Posterior vena cava (tissue), 2 donors: ENCODE measurements at regions of chr5 and their contacts with region 1.

Region 1: DNA sequence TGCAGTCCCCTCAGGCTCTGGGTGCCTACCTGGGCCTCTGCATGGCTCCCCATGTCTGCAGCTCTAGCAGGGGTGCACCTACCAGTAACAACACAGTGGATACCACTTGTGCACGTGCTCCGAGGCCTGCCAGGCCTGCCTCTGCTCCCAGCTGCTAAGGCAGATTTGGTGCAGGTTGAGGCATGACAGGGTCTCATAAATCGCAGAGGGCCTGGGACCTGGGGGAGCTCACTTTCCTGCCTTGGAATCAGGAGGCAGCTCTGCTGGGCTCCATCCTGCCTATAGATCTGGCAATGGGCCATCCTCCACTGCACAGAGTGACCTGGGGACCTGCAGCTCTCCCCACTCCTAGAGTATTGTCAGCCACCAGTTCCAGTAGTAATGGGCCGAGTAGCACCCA is 121.9 kb upstream of the CXCL14 start:
- DNase-seq: no peak

Region 2: DNA sequence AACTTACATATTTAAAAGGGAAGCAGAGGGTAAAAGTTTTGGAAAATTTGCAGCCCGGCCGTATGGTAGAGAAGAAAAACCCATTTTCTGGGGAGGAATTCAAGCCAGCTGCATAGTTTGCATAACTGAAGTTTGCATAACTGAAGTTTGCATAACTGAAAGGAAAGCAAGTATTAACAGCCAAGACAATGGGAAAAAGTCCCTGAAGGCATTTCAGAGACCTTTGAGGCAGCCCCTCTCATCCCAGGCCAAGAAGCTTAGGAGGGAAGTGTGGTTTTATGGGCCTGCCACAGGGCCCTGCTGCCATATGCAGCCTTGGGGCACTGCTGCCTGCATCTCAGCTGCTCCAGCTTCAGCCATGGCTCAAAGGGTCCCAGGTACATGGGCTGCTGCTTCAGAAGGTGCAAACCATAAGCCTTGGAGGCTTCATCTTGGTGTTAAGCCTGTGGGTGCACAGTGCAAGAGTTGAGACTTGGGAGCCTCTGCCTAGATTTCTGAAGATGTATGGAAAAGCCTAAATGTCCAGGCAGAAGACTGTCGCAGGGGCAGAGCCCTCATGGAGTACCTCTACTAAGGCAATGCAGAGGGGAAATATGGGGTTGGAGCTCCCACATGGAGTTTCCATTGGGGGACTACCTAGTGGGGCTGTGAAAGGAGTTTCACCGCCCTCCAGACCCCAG is 85.0 kb before region 1 on chr5:
- intact Hi-C with region 1: no loop called
- DNase-seq: no peak

Region 3: GRCh38 chr5:135651150-135651549 is 49.6 kb before region 1 on chr5:
- intact Hi-C with region 1: no loop called
- DNase-seq: no peak

Region 4: GRCh38 chr5:137589185-137589584 is 1888.5 kb after region 1 on chr5:
- intact Hi-C with region 1: loop called in 1 of 2 experiments (anchors 5 kb)
- DNase-seq: no peak